Heart left ventricle (tissue), 16 donors: ENCODE measurements at regions of chr17 and their contacts with region 1.

Region 1: GRCh38 chr17:16676676-16677268 is 13.3 kb upstream of the CCDC144A start:
- DNase-seq: no peak
- ATAC-seq: no peak
- H3K4me3 ChIP-seq: no peak overlapping the region
- H3K27ac ChIP-seq: no peak overlapping the region
- H3K4me1 ChIP-seq: no peaks in the 10 kb centered on the region
- H3K27me3 ChIP-seq: peaks cover 0 to 26% (median 0%) of the 10 kb centered on the region in 9 donors
- CTCF ChIP-seq: no peak
- POLR2A ChIP-seq: no peak

Region 2: GRCh38 chr17:16512011-16512410 is 164.8 kb before region 1 on chr17:
- intact Hi-C with region 1: no loop called
- DNase-seq: no peak
- ATAC-seq: peak in 1 of 4 donors; percentile 9
- H3K4me3 ChIP-seq: no peak overlapping the region
- H3K27ac ChIP-seq: no peak overlapping the region
- H3K4me1 ChIP-seq: peaks cover 0 to 18% (median 6%) of the 10 kb centered on the region in 12 donors
- H3K27me3 ChIP-seq: no peaks in the 10 kb centered on the region
- CTCF ChIP-seq: no peak
- POLR2A ChIP-seq: no peak

Region 3: DNA sequence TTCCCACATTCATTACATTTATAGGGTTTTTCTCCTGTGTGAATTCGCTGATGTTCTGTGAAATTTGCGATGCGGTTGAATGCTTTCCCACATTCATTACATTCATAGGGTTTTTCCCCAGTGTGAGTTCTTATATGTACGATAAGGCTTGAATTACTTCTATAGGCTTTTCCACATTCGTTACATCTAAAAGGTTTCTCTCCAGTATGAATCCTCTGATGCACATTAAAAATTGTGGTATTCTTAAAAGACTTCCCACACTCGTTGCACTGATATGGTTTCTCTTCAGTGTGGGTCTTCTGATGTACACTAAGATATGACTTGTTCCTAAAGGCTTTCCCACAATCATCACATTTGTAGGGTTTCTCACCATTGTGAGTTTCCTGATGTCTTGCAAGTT is 53.5 kb before region 1 on chr17:
- intact Hi-C with region 1: loop called in 1 of 10 experiments (anchors 2 kb)
- DNase-seq: no peak
- ATAC-seq: no peak
- H3K4me3 ChIP-seq: no peak overlapping the region
- H3K27ac ChIP-seq: no peak overlapping the region
- H3K4me1 ChIP-seq: no peaks in the 10 kb centered on the region
- H3K27me3 ChIP-seq: no peaks in the 10 kb centered on the region
- CTCF ChIP-seq: no peak
- POLR2A ChIP-seq: no peak

Region 4: GRCh38 chr17:16653209-16654041 is 23.3 kb before region 1 on chr17 and contains the start of gene ZNF624:
- intact Hi-C with region 1: no loop called
- DNase-seq: peak; percentile 94 to 98 (median 98)
- ATAC-seq: peak; percentile 97 to 99 (median 98)
- H3K4me3 ChIP-seq: peak within 1 kb of the TSS; percentile 46 to 91 (median 68)
- H3K27ac ChIP-seq: peak within 1 kb of the TSS; percentile 87 to 98 (median 94)
- H3K4me1 ChIP-seq: peaks cover 0 to 19% (median 5%) of the 10 kb centered on the region in 12 donors
- H3K27me3 ChIP-seq: no peaks in the 10 kb centered on the region
- CTCF ChIP-seq: no peak
- POLR2A ChIP-seq: peak in 1 of 2 donors; percentile 90
- total RNA-seq, gene ZNF624: 0.88 to 5.6 (median 1.8) TPM